A549 (cell line): ENCODE measurements at regions of chr11 and their contacts with region 1.

Region 1: DNA sequence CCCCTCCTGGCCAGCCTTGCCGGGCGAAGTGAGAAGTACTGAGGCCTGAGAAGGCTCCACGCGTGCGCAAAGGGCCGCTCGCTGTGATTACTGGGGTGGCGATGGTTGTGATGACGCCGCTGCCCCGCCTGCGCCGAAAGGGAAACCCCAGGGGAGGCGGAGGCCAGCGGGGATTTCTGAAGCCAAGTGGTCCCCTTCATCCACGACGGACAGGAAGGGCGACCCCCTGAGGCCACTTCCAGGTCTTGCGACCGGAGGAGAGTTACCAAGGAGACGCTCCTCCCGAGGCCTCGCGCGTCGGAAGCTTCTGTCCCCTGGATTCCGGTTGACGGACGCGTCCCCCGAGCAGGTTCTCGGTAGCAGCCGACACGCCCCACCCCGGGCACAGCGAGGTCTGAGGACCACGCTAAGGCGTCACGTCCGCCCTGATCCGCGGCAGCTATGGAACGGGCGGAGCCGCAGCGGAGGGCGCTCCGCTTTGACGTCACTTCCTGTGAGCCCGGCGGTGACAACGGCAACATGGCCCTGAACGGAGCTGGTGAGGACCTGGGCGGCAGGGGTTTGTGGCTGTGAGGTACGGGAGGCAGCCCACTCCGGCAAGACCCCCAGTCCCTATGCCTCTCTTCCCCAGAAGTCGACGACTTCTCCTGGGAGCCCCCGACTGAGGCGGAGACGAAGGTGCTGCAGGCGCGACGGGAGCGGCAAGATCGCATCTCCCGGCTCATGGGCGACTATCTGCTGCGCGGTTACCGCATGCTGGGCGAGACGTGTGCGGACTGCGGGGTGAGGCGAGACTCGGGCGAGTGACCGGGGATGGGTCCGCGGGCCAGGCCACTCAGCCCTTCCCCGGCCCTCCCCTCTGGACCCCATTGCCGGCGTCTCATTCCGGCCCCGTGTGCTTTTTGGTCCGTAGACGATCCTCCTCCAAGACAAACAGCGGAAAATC is at the start of gene ZNRD2:
- DNase-seq: peak; percentile 96 to 99
- ATAC-seq: peak; percentile 72 to 86
- H3K4me3 ChIP-seq: peak within 1 kb of the TSS; percentile 81
- H3K27ac ChIP-seq: peak within 1 kb of the TSS; percentile 83 to 98
- H3K4me1 ChIP-seq: peaks cover 49% of the 10 kb centered on the region
- CTCF ChIP-seq: peak; percentile 66
- EP300 ChIP-seq: 0 out of 5 replicates have a peak, but pooled peaks of 1 of the 2 experiments have one; percentile 26
- POLR2A ChIP-seq: peak; percentile 62
- RAD21 ChIP-seq: peak; percentile 56 to 67
- polyA plus RNA-seq, gene ZNRD2: 28.2 and 32.3 TPM in 2 replicates

Region 2: GRCh38 chr11:65551572-65552398 is 18.5 kb before region 1 on chr11:
- CTCF ChIA-PET with region 1: interaction called, 393 read pairs
- POLR2A ChIA-PET with region 1: interaction called, 3 read pairs
- DNase-seq: peak; percentile 58 to 81
- ATAC-seq: peak; percentile 57 to 72; a peak in 5 of 6 replicates
- H3K4me3 ChIP-seq: no peak overlapping the region
- H3K27ac ChIP-seq: no peak overlapping the region; a peak in 1 of 6 replicates
- H3K4me1 ChIP-seq: peaks cover 50% of the 10 kb centered on the region
- CTCF ChIP-seq: peak; percentile 54
- EP300 ChIP-seq: no peak
- POLR2A ChIP-seq: no peak
- RAD21 ChIP-seq: peak; percentile 42 to 52; a peak in 4 of 5 replicates

Region 3: DNA sequence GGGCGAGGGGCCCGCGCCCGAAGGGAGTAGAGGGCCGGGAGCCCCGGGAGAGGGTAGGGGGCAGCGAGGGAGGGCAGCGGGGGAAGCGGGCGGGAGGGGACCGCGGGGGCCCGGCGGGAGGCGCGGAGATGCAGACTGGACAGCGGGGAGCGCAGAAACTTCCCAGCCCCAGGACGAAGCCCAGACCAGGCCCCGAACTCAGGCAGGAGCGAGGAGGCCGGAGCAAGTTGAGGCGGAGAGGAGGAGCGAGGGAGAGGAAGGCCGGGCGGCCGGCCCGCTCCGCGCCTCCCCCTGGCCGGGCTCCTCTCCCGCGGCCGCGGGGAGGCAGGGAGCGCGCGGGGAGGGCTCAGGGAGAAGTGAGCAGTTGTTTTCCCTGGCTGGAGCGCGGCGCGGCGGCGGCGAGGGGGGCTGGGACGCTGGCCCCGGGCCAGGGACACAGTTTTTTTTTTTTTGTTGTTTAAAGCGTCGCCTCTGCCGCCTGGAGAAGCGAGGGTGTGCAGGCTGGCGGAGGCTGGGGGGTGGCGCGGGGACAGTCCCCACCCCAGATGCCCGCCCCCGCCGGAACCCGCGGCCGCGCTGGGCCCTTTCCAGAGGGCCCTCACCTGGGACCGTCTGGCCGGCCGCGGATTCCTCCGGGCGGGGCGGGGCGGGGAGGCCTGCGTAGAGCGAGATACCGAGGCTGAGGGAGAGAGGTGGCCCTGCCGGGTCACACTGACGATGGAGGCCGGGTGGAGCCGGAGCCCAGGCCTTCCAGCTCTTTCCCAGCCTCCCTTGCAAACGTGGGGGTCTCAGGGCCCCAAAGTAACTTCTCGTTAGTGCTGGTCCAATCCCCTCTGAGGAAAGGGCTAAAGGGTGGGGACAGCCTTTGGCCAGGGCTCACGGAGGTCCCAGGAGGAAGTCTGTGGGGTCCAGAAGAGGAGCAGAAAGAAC is 12.0 kb before region 1 on chr11 and contains the start of gene LTBP3:
- CTCF ChIA-PET with region 1: interaction called, 96 read pairs
- POLR2A ChIA-PET with region 1: interaction called, 51 read pairs
- DNase-seq: peak; percentile 59 to 64
- ATAC-seq: peak; percentile 9 to 30; a peak in 5 of 6 replicates
- H3K4me3 ChIP-seq: peak within 1 kb of the TSS; percentile 62
- H3K27ac ChIP-seq: peak within 1 kb of the TSS; percentile 94 to 99
- H3K4me1 ChIP-seq: peaks cover 75% of the 10 kb centered on the region
- CTCF ChIP-seq: no peak
- EP300 ChIP-seq: no peak; a peak in 1 of 5 replicates
- POLR2A ChIP-seq: 0 out of 2 replicates have a peak, but pooled peaks have one; percentile 18
- RAD21 ChIP-seq: no peak
- polyA plus RNA-seq, gene LTBP3: 28.6 and 39.9 TPM in 2 replicates

Region 4: GRCh38 chr11:65588199-65589054 is 18.2 kb after region 1 on chr11:
- CTCF ChIA-PET with region 1: interaction called, 119 read pairs
- POLR2A ChIA-PET with region 1: interaction called, 5 read pairs
- DNase-seq: peak; percentile 77 to 86
- ATAC-seq: peak; percentile 76 to 90
- H3K4me3 ChIP-seq: no peak overlapping the region
- H3K27ac ChIP-seq: peak overlapping the region in 1 of 2 experiments; percentile 69; a peak in 3 of 6 replicates
- H3K4me1 ChIP-seq: peaks cover 15% of the 10 kb centered on the region
- CTCF ChIP-seq: peak; percentile 50
- EP300 ChIP-seq: no peak
- POLR2A ChIP-seq: no peak
- RAD21 ChIP-seq: peak; percentile 50 to 68

Region 5: DNA sequence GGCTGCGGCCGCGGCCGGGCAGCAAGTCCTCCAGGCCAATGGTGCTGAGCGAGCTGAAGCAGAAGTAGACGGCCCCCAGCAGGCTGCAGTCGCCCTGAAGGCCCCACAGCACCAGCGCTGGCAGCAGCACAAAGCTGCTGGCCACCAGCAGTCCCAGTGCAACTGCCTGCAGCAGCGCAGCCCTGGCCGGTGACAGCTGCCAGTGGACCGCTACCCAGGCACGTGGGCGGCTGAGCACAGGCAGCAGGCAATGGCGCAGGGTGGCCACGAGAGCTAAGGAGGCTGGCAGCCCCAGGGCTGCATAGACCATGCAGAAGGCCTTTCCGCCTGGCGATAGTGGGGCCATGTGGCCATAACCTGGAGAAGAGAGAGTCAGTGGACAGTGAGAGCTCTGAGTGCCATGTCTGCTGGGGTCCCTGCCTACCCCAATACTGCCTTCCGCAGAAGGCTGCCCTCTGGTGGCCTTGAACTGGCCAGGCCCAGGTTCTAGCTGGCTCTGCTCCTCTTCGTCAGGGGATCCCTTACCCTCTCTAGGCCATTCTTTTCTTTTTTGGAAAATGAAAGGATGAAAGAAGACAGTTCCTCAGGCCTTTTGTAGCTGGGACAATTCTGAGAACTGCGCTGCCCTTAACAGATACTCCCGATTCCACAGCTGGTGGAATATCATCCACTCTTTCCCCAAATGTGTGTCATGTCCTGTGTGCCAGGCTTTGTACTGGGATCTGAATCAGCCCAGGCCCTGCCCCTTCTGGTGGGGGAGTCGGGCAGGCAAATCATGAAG is 23.5 kb after region 1 on chr11:
- CTCF ChIA-PET with region 1: interaction called, 119 read pairs
- POLR2A ChIA-PET with region 1: interaction called, 5 read pairs
- DNase-seq: no peak
- ATAC-seq: peak; percentile 42 to 73; a peak in 4 of 6 replicates
- H3K4me3 ChIP-seq: no peak overlapping the region
- H3K27ac ChIP-seq: no peak overlapping the region
- H3K4me1 ChIP-seq: no peaks in the 10 kb centered on the region; the same call in 2 of the 3 replicates
- CTCF ChIP-seq: peak; percentile 66
- EP300 ChIP-seq: no peak
- POLR2A ChIP-seq: no peak
- RAD21 ChIP-seq: peak; percentile 34 to 43; a peak in 3 of 5 replicates

Region 6: DNA sequence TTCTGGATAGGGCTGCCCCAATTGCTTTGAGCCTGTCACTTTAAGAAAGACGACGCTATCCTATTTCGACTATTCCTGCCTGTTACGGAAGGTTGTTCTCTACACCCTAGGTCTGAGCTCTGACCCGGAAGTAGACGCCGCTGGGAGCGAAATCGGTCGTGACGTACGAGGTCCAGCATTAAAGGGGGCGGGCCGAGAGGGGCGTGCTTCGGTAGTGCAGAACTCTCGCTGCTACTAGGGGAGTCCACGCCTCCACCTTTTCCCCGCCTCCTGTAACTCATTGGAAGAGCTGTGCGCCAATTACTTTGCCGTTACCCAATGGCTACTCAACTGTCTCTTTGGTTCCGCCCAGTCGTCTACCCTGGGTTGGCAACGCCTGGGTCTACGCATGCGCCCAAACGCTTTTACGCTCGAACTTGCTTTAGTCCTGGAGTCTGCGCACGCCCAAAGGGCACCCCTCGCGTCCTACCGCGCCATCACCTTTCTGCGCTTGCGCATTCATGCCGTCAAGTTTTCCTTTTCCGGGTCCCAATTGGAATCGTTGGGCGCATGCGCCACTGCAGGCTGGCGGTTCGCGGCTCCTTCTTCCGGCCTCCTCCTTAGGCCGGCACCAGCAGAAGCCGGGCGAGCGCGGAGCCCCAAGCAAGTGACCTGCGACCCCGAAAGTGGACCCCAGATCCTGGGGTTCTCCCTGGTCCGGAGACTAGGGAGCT is 45.1 kb after region 1 on chr11 and contains the start of gene PCNX3:
- CTCF ChIA-PET with region 1: interaction called, 25 read pairs
- POLR2A ChIA-PET with region 1: interaction called, 8 read pairs
- DNase-seq: peak; percentile 100
- ATAC-seq: peak; percentile 78 to 86
- H3K4me3 ChIP-seq: peak within 1 kb of the TSS; percentile 92
- H3K27ac ChIP-seq: peak within 1 kb of the TSS; percentile 96 to 98
- H3K4me1 ChIP-seq: peaks cover 39% of the 10 kb centered on the region
- CTCF ChIP-seq: no peak
- EP300 ChIP-seq: no peak
- POLR2A ChIP-seq: peak; percentile 45
- RAD21 ChIP-seq: no peak
- polyA plus RNA-seq, gene PCNX3: 14.2 and 17.2 TPM in 2 replicates